Mammary epithelial cell (primary cell): ENCODE measurements at regions of chr2 and their contacts with region 1.

Region 1: DNA sequence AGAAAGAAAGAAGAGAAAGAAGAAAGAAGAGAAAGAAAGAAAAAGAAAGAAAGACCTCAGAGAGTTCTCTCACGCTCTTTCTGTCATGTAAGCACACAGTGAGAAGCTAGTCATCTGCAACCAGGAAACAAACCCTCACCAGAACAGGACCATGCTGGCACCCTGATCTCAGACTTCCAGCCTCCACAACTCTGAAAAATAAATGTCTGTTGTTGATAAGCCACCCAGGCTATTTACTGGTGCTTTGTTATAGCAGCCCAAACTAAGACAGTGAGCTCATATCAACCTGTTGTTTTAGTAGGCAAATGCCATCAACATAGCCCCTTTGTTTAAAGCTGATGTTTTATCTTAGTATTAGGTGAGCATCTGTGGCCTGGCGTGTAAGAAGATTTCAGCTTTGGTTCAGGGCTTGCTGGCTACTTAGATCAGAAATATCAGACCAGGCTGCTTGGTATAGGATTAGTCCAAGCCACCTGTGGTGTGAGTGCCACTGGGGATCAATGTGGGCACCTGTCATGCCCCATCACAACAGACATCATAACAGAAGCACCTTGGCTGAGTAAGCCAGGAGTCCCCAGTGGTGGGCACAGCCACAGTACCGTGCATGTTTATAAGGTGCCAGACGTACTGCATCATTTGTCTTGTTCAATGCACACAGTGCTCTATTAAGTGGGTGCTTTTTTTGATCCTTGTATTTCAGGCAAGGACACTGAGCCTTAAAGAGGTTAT is 94.4 kb downstream of the LBH start:
- DNase-seq: no peak
- H3K4me3 ChIP-seq: no peak overlapping the region
- H3K27ac ChIP-seq: no peak overlapping the region
- H3K4me1 ChIP-seq: no peaks in the 10 kb centered on the region
- H3K27me3 ChIP-seq: no peaks in the 10 kb centered on the region
- CTCF ChIP-seq: no peak

Region 2: GRCh38 chr2:30915486-30915885 is 589.7 kb after region 1 on chr2:
- CTCF ChIA-PET with region 1: interaction called, 12 read pairs
- dilution Hi-C with region 1: no loop called
- in situ Hi-C with region 1: no loop called
- intact Hi-C with region 1: no loop called
- DNase-seq: peak; percentile 2
- H3K4me3 ChIP-seq: no peak overlapping the region
- H3K27ac ChIP-seq: no peak overlapping the region
- H3K4me1 ChIP-seq: no peaks in the 10 kb centered on the region
- H3K27me3 ChIP-seq: no peaks in the 10 kb centered on the region
- CTCF ChIP-seq: peak; percentile 11 to 40